HEK293 (cell line): ENCODE measurements at regions of chr4 and their contacts with region 1.

Region 1: DNA sequence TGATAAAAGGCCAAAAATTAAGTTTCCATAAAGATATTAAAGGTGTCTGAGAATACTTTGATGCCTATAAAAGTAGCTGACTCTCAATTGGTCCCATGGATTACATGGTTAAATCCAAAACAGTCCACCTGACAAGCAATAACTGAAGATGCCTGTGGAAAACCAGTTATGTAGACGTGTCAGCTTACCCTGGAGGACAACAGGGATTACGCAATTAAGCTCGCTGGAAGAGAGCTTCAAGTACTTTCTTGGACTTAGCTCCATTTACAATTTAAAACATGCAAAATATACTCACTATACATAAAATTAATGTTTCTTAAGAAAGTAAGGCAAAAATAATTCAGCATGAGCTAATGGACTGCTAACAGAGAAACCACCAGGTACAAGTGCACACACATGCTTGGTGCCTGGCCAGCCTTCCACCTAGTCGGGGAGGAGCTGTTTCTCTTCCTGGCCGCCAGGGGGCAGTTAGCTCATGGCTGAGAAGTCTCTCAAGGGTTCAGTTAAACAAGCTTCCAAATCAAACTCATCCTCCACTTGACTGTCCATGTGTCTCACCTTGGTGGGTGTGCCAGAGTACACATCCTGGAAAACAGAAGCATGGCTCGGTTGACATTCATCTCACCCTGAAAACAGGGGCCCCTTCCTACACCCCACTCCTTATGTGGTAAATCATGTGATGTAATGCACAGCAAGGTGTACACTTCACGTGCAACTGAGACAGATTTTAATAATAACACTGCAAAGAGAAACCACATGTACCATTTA is 9.2 kb upstream of the FAM53A start:
- H3K4me3 ChIP-seq: no peak overlapping the region
- H3K27ac ChIP-seq: no peak overlapping the region
- H3K4me1 ChIP-seq: no peaks in the 10 kb centered on the region
- CTCF ChIP-seq: peak; percentile 34; the same call in 1 of the 2 replicates

Region 2: GRCh38 chr4:1706358-1706757 is 13.0 kb after region 1 on chr4:
- CTCF ChIA-PET with region 1: interaction called, 38 read pairs
- POLR2A ChIA-PET with region 1: interaction called, 8 read pairs
- H3K4me3 ChIP-seq: no peak overlapping the region
- H3K27ac ChIP-seq: no peak overlapping the region
- H3K4me1 ChIP-seq: no peaks in the 10 kb centered on the region
- CTCF ChIP-seq: no peak

Region 3: GRCh38 chr4:1712216-1713002 is 19.1 kb after region 1 on chr4 and contains the start of gene SLBP:
- CTCF ChIA-PET with region 1: interaction called, 38 read pairs
- POLR2A ChIA-PET with region 1: interaction called, 21 read pairs
- H3K4me3 ChIP-seq: peak within 1 kb of the TSS; percentile 85
- H3K27ac ChIP-seq: peak within 1 kb of the TSS; percentile 99
- H3K4me1 ChIP-seq: no peaks in the 10 kb centered on the region
- CTCF ChIP-seq: no peak

Region 4: GRCh38 chr4:1721004-1721665 is 27.8 kb after region 1 on chr4 and contains the starts of genes TACC3 and TMEM129:
- CTCF ChIA-PET with region 1: interaction called, 61 read pairs
- POLR2A ChIA-PET with region 1: interaction called, 13 read pairs
- H3K4me3 ChIP-seq: peak within 1 kb of the TSS; percentile 78
- H3K27ac ChIP-seq: peak within 1 kb of the TSS; percentile 88
- H3K4me1 ChIP-seq: no peaks in the 10 kb centered on the region
- CTCF ChIP-seq: no peak

Region 5: DNA sequence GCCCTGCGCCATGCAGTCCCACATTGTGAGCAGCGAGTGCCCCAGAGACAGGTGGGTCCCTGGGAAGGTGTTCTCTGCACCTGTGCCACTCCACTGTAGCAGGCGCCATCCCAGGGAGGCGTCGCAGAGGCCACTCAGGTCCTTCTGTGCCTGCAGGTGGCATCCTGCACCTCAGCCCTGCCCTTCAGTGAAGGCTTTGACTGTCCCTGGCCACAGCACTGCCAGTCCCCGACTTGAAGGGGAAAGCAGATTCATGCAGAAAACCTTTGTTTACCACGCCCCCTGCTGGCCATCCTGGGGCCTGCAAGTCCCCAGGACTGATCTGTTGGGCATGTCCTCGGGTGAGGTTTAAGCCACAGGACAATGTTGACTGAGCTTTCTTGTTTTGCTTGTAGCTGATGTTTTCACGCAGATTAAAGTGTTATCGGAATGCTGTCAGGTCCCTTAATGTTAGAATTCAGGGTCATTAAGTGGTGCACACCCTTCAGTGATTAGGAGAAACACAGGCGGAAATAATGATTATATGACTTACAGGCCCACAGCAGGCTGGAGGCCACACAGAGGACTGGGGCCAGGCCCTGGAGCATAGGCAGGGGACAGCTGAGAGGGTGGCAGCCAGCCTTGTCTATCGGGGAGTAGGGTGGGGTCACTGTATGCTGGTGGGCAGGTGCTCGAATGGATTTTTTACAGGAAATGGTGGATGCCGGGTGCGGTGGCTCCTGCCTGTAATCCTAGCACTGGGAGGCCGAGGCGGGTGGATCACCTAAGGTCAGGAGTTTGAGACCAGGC is 33.0 kb after region 1 on chr4:
- CTCF ChIA-PET with region 1: interaction called, 61 read pairs
- POLR2A ChIA-PET with region 1: interaction called, 13 read pairs
- H3K4me3 ChIP-seq: no peak overlapping the region
- H3K27ac ChIP-seq: no peak overlapping the region
- H3K4me1 ChIP-seq: no peaks in the 10 kb centered on the region
- CTCF ChIP-seq: peak; percentile 79